ENCODE measurements at regions of chr11 and their contacts with region 1.

Region 1: GRCh38 chr11:130671801-130672700 is 223.6 kb downstream of the ADAMTS15 start:
- DNase-seq: peak; percentile 59 to 87 (median 74)
- ATAC-seq: peak; percentile 66 to 79 (median 76)
- H3K4me3 ChIP-seq: no peak overlapping the region
- H3K27ac ChIP-seq: peak overlapping the region in 10 of 12 donors; percentile 12 to 86 (median 36)
- H3K4me1 ChIP-seq: peaks cover 0 to 50% (median 36%) of the 10 kb centered on the region in 12 donors
- H3K27me3 ChIP-seq: no peaks in the 10 kb centered on the region
- CTCF ChIP-seq: no peak
- POLR2A ChIP-seq: no peak

Region 2: GRCh38 chr11:130827451-130828377 is 155.7 kb after region 1 on chr11:
- intact Hi-C with region 1: loop called in 4 of 10 experiments (anchors 5 to 10 kb)
- DNase-seq: peak in 4 of 5 donors; percentile 63 to 86 (median 79)
- ATAC-seq: peak; percentile 83 to 94 (median 91)
- H3K4me3 ChIP-seq: no peak overlapping the region
- H3K27ac ChIP-seq: peak overlapping the region in 10 of 12 donors; percentile 24 to 73 (median 58)
- H3K4me1 ChIP-seq: peaks cover 0 to 42% (median 25%) of the 10 kb centered on the region in 12 donors
- H3K27me3 ChIP-seq: no peaks in the 10 kb centered on the region
- CTCF ChIP-seq: peak; percentile 13 to 62 (median 48)
- POLR2A ChIP-seq: no peak

Measured in heart left ventricle (tissue), 16 donors.